IMR-90 (cell line): ENCODE measurements at regions of chr16 and their contacts with region 1.

Region 1: DNA sequence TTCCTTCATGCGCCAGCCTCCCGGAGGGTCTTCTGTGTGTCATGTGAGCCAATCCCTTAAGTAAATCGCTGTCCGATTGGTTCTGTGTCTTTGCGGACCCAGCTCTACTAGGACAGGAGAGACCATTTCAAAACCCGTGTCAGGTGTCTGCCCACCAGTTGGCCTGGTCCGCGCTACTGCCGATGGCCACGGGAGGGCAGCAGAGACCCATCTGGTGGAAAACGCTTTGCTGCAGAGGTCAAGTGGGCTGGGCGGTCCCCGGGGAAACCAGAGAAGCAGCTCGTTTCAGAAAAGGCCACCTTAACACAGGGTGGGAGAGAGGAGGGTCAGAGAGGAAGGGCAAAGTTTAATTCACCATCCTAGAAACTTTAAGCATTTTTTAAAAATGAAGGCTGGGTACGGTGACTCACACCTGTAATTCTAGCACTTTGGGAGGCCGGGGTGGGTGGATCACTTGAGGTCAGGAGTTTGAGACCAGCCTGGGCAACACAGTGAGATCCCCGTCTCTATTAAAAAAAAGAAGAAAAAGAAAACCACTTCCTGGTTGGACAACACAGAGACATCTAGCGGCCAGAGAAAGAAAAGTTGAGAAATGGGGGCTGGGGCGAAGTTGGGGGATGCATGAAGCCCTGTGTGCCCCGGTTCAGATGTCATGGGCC is 2.8 kb upstream of the CIBAR2 start:
- DNase-seq: peak; percentile 74
- ATAC-seq: peak; percentile 99
- H3K4me3 ChIP-seq: no peak overlapping the region
- H3K27ac ChIP-seq: peak overlapping the region; percentile 5; the same call in 1 of the 2 replicates
- H3K4me1 ChIP-seq: no peaks in the 10 kb centered on the region; the same call in 1 of the 2 replicates
- H3K27me3 ChIP-seq: no peaks in the 10 kb centered on the region
- CTCF ChIP-seq: peak; percentile 97
- POLR2A ChIP-seq: peak; percentile 51; the same call in 1 of the 2 replicates
- RAD21 ChIP-seq: peak; percentile 99

Region 2: DNA sequence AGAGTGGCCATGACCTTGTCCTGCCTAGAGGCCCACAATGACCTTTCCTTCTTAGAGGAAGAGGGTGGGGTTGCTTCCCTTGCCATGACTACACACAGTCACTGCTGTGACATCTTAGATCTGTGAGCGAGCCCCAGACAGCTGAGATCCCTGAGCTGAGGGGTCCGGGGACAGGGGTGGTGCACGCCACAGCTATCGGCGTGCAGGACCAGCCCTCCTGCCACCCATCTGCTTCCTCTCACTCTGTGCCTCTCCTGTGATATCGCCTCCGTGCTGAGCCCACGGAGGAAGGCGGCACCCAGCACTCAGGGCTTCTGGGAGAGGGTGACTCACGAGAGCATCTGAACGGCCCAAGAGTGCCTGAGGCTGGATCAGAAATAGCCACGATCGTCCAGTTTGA is 52.2 kb before region 1 on chr16:
- CTCF ChIA-PET with region 1: no interaction called
- POLR2A ChIA-PET with region 1: no interaction called
- dilution Hi-C with region 1: no loop called
- in situ Hi-C with region 1: no loop called
- intact Hi-C with region 1: no loop called
- DNase-seq: no peak
- ATAC-seq: no peak
- H3K4me3 ChIP-seq: no peak overlapping the region
- H3K27ac ChIP-seq: no peak overlapping the region
- H3K4me1 ChIP-seq: no peaks in the 10 kb centered on the region
- H3K27me3 ChIP-seq: no peaks in the 10 kb centered on the region
- CTCF ChIP-seq: no peak
- POLR2A ChIP-seq: no peak
- RAD21 ChIP-seq: no peak

Region 3: GRCh38 chr16:85090873-85091521 is 24.0 kb before region 1 on chr16:
- CTCF ChIA-PET with region 1: no interaction called
- POLR2A ChIA-PET with region 1: no interaction called
- dilution Hi-C with region 1: no loop called
- in situ Hi-C with region 1: no loop called
- intact Hi-C with region 1: no loop called
- DNase-seq: no peak
- ATAC-seq: no peak
- H3K4me3 ChIP-seq: no peak overlapping the region
- H3K27ac ChIP-seq: no peak overlapping the region
- H3K4me1 ChIP-seq: no peaks in the 10 kb centered on the region
- H3K27me3 ChIP-seq: peaks cover 14% of the 10 kb centered on the region
- CTCF ChIP-seq: no peak
- POLR2A ChIP-seq: no peak
- RAD21 ChIP-seq: no peak

Region 4: DNA sequence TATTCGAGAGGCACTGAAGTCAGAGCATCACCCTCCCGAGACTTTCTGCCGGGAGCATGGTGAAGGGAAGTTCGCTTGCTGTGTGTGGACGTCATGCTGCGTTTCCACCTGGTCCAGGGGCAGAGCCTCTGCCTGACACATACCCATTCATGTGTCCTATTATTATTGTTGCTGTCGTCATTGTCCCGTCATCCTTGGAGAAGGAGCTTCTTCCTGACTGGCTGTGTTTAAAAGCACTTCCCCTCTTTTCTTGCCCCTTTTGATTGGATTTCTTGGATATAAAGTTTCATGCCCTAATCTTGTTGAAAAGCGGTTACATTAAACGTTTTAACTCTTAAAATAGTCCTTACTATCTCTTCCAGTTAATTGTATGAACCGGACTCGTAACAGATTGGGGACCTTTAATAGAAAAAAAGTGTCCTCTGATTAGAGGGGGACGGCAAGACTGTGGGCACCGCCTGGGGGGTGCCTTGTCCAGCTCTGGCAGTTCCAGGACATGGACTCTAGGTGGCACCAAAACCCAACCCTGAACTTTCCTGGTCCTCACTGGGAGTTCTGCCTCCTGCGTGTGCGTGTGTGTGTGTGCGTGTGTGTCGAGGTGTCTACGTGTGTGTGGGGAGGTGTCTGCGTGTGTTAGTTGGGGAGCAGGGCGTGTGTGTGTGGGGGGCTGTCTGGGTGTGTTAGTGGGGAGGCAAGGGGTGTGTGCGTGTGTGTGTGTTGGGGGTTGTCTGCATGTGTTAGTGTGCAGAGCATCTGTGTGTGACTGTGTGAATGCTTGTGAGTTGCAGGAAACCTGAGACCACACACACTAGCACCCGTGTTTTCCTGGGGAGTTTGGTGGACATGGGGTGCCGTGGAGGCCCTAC is 130.5 kb after region 1 on chr16:
- CTCF ChIA-PET with region 1: interaction called, 3 read pairs
- POLR2A ChIA-PET with region 1: no interaction called
- dilution Hi-C with region 1: no loop called
- in situ Hi-C with region 1: no loop called
- intact Hi-C with region 1: loop called (anchors 1 kb)
- DNase-seq: peak; percentile 79
- ATAC-seq: peak; percentile 85
- H3K4me3 ChIP-seq: no peak overlapping the region
- H3K27ac ChIP-seq: no peak overlapping the region
- H3K4me1 ChIP-seq: peaks cover 17% of the 10 kb centered on the region
- H3K27me3 ChIP-seq: no peaks in the 10 kb centered on the region
- CTCF ChIP-seq: peak; percentile 85
- POLR2A ChIP-seq: 0 out of 2 replicates have a peak, but pooled peaks have one; percentile 17
- RAD21 ChIP-seq: peak; percentile 80